Activated naive CD4-positive, alpha-beta T cell treated with anti-CD3 and anti-CD28 coated beads for 36 hours (primary cell): ENCODE measurements at regions of chr12 and their contacts with region 1.

Region 1: GRCh38 chr12:8996682-8997360 is 7.5 kb downstream of the KLRG1 start:
- DNase-seq: peak; percentile 65
- H3K4me3 Mint-ChIP-seq: no peak overlapping the region
- H3K27ac Mint-ChIP-seq: peak overlapping the region; percentile 16
- H3K4me1 Mint-ChIP-seq: peaks cover 67% of the 10 kb centered on the region
- H3K27me3 Mint-ChIP-seq: no peaks in the 10 kb centered on the region

Region 2: DNA sequence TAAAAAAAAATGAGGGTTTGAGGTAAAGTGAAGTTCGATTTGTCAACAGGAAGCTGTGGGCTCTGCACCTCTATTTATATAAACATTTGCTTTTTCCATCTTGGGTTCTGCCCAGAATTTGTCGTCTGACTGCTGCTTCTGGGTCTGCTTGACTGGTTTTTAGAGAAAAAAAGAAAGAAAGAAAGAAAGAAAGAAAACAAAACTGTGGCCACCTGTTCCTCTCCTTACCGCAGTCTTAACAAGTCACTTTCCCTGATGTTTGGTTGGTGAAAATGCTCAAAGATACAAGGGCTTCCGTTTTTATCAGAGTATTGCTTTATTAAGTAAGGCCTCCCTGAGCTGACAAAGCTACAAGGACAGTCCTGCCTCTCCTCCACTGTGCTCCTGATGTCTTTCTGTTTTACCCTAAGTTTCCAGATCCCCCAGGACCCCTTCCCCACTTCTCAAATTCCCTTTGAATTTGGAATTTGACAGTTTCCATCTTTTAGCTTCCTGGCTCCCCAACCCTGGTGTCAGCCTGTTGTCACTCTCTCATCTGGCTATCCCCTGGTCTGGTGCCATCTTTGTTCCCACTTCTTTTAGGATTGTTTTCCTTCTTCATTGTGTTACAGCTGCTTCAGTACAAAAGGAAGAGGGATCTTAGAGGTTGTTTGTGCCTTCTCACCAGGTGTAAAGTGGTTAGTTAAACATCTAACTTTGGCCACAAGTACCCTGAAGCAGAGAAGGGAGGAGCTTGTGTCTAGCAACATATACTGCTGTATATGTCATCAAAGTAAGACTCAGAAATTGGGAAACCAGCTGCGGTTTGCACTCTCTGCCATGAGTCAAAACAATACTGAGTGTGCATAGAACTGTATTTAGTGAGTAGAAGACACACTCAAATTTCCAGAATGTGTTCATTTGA is 352.2 kb before region 1 on chr12:
- CTCF ChIA-PET with region 1: no interaction called
- intact Hi-C with region 1: loop called (anchors 1 kb)
- DNase-seq: peak; percentile 85
- H3K4me3 Mint-ChIP-seq: peak overlapping the region; percentile 47
- H3K27ac Mint-ChIP-seq: peak overlapping the region; percentile 86
- H3K4me1 Mint-ChIP-seq: peaks cover 36% of the 10 kb centered on the region
- H3K27me3 Mint-ChIP-seq: no peaks in the 10 kb centered on the region

Region 3: DNA sequence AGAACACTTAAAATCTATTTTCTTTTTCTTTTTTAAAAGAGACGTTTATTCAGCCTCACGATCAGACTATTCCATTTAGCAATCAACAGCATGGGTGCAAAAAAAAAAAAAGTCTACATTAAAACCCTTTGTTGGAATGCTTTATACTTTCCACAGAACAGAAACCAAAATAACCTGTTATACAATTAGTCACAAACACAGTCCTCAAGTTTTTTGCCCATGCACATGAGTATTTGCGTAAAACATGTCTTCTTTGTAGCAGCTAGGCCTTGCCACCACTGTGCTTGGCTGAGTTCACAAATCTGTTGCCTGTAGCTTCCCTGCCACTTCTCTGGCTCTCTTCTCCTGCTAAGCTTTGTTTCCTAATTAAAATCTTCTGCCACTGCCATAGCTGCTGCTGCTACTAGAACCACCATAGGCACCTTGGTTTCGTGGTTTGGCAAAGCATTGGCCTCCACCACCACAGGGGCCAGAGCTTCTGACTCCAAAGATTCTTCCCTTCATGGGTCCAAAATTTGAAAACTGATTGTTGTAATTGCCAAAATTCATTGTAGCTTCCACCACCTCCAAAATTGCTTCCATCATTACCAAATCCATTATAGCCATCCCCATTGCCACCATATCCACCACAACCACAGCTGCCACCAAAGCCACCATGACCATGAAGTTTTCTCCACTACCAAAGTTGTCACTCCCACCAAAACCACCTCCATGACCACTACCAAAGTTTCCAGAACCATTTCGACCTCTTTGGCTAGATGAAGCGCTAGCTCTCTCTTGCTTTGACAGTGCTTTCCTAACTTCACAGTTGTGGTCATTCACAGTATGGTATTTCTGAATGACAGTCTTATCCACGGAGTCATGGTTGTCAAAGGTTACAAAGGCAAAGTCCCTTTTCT is 30.6 kb after region 1 on chr12:
- CTCF ChIA-PET with region 1: interaction called, 4 read pairs
- intact Hi-C with region 1: loop called (anchors 1 kb)
- DNase-seq: peak; percentile 28
- H3K4me3 Mint-ChIP-seq: peak overlapping the region; percentile 6
- H3K27ac Mint-ChIP-seq: peak overlapping the region; percentile 69
- H3K4me1 Mint-ChIP-seq: peaks cover 50% of the 10 kb centered on the region
- H3K27me3 Mint-ChIP-seq: no peaks in the 10 kb centered on the region

Region 4: GRCh38 chr12:9673404-9674225 is 676.8 kb after region 1 on chr12:
- CTCF ChIA-PET with region 1: no interaction called
- intact Hi-C with region 1: loop called (anchors 10 kb)
- DNase-seq: peak; percentile 84
- H3K4me3 Mint-ChIP-seq: peak overlapping the region; percentile 90
- H3K27ac Mint-ChIP-seq: peak overlapping the region; percentile 97
- H3K4me1 Mint-ChIP-seq: peaks cover 35% of the 10 kb centered on the region
- H3K27me3 Mint-ChIP-seq: no peaks in the 10 kb centered on the region